ENCODE measurements at regions of chr19 and their contacts with region 1.

Region 1: DNA sequence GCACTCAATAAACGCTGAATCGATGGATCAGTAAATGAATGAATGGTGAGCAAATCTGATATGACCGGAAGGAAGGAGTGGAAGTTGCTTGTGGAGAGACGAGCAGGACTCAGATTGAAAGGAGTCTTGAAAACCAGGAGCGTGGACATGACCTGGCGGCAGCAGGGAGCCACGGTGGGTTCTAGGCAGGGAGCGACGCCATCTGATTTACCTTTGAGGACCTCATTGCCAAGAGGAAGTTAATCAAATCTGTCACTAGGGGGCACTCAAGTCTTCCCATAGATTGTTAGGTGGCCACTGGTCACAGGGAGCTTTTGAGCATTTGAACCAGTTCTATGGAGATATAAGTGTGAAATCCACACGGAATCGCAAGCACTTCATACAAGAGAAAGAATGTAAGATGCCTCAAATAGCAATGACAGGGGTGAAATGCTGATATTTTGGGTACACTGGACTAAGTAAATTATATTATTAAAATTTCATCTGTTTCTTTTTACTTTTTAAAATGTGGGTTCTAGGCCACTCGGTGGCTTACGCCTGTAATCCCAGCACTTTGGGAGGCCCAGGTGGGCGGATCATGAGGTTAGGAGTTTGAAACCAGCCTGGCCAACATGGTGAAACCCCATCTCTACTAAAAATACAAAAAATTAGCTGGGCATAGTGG is 9.2 kb upstream of the FBN3 start:
- DNase-seq: peak; percentile 49
- ATAC-seq: peak; percentile 78 to 85
- H3K4me3 ChIP-seq: no peak overlapping the region
- H3K27ac ChIP-seq: no peak overlapping the region
- H3K4me1 ChIP-seq: peaks cover 13% of the 10 kb centered on the region
- H3K27me3 ChIP-seq: no peaks in the 10 kb centered on the region
- CTCF ChIP-seq: peak; percentile 81

Region 2: DNA sequence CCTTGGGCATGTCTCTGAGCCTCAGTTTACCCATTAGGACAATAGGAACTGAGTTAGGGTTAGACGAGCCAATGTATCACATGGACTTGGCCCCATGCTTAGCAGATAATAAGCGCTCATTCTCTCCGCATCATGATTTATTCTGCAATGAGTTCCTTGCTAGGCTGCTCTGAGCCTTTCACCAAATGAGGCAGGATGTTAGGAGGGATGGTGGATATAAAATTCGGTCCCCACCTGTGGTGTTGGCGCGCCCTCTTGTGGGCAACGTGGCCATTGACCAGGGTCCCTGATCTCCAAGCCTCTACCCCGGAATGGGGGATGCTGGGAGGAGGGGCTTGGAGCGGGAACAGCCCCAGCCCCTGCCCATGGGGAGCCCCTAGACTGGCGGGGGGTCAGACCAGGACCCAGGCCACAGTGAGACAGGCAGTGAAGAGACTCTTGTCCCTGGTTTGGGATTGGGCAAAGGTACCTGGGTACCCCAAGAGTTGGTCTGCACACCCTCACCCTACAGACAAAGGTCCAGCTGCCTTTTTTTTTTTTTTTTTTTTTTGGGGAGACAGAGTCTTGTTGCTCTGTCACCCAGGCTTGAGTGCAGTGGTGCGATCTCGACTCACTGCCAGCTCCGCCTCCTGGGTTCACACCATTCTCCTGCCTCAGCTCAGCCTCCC is 94.5 kb after region 1 on chr19:
- intact Hi-C with region 1: loop called (anchors 5 kb)
- DNase-seq: peak; percentile 87
- ATAC-seq: peak; percentile 71 to 74
- H3K4me3 ChIP-seq: no peak overlapping the region
- H3K27ac ChIP-seq: no peak overlapping the region
- H3K4me1 ChIP-seq: peaks cover 15% of the 10 kb centered on the region
- H3K27me3 ChIP-seq: no peaks in the 10 kb centered on the region
- CTCF ChIP-seq: peak; percentile 95